ENCODE measurements at regions of chr5 and their contacts with region 1.

Region 1: DNA sequence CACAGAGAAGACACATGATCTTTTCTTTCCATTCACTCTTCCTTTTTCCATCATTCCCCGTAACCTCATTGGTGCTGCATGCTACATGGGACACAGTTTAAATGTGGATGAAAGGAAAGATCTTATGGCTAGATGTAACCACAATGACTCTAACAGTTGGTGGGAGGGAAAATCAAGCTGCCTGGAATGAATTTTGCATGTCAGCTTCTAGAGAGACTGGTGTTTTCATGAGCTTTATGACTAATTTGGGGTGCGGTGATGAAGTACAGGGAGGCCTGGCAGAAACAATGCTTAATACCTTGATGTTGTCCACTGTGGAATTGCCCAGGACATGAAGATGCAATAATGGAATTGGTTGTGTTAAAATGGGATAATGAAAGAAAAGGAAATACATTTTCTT is 55.9 kb upstream of the MYO10 start:
- DNase-seq: peak; percentile 17
- H3K4me3 Mint-ChIP-seq: no peak overlapping the region
- H3K27ac Mint-ChIP-seq: peak overlapping the region; percentile 80
- H3K4me1 Mint-ChIP-seq: peaks cover 37% of the 10 kb centered on the region
- H3K27me3 Mint-ChIP-seq: no peaks in the 10 kb centered on the region
- CTCF ChIP-seq: no peak

Region 2: DNA sequence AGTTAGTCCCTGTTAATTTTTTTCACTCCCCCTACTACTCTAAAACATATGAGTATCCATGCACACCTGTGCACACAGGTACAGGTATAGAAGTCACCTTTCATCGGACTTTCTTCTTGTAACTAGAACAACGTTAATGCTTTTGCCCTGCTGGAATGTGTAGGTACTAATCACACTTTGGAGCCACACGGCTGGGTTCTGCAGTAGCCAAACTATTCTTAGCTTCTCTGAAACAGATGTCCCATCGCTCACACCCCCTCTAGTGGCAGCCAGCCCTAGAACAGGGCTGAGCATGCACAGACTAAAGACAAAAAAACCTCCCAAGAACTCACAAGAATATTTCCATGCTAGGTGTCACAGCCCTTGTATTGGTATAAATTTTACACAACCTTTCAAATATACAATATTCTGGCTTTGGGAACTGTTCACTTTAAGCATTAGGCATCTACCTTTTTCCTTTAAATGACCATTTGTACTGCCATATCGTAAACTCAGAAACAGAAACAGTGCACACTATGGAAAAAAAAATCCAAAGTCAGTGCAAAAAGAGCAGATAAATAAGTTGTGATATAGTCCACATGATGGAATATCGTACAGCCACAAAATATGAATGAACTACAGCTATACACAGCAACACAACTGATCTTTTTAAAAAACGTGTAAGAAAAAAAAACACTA is 439.2 kb before region 1 on chr5:
- CTCF ChIA-PET with region 1: no interaction called
- intact Hi-C with region 1: no loop called
- DNase-seq: peak; percentile 88
- H3K4me3 Mint-ChIP-seq: no peak overlapping the region
- H3K27ac Mint-ChIP-seq: no peak overlapping the region
- H3K4me1 Mint-ChIP-seq: peaks cover 26% of the 10 kb centered on the region
- H3K27me3 Mint-ChIP-seq: no peaks in the 10 kb centered on the region
- CTCF ChIP-seq: peak; percentile 71

Region 3: DNA sequence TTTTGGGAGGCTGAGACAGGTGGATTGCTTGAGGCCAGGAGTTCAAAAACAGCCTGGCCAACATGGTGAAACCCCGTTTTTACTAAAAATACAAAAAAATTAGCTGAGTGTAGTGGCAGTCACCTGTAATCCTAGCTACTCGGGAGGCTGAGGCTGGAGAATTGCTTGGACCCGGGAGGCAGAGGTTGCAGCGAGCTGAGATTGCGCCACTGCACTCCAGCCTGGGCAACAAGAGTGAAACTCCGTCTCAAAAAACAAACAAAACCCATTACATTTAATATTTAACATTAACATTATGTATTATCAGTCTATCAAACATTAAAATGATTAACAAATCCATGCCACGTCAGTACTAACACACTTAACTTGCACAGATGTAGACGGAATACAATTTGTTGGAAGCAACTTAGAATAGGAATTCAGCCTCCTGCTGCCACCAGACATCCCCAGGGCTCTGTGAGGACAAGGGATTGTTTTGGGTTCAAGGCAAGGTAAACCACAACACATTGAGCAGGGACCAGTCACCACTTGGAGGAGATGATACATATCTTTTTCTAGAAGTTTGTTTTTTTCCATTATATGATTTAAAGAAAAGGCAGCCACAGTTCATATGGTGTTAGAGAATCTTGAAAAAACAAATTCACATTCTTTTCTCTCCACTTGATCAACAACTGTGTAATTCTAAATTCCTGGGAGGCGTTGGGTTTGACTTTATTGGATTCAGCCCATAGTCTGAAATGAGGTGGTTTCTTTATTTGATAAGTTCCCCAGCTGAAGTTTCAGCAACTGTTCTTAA is 121.4 kb after region 1 on chr5:
- CTCF ChIA-PET with region 1: interaction called, 4 read pairs
- intact Hi-C with region 1: loop called (anchors 5 kb)
- DNase-seq: peak; percentile 49
- H3K4me3 Mint-ChIP-seq: peak overlapping the region; percentile 59
- H3K27ac Mint-ChIP-seq: peak overlapping the region; percentile 96
- H3K4me1 Mint-ChIP-seq: peaks cover 54% of the 10 kb centered on the region
- H3K27me3 Mint-ChIP-seq: no peaks in the 10 kb centered on the region
- CTCF ChIP-seq: no peak

Measured in Calu3 (cell line).